PC-3 (cell line): ENCODE measurements at regions of chr7 and their contacts with region 1.

Region 1: DNA sequence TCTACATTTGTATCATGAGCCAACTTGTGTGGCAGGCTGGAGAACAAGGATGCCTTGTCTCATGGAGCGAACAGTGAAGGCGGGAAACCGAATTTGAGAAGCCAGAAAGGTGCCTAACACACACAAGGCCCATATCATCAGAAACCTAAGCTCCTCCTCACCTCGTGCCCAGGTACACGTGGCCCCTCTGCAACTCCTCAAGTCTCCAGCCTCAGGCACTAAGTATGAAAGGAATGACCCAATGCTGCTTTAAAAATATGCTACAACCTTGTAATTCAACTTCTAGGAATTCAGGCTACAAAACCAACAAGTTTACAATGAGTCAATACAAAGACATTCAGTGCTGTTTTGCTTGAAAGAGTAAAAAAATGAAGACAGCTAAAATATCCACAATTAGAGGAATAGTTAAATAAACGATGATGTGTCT is 95.7 kb downstream of the CDK6 start:
- DNase-seq: peak; percentile 89
- ATAC-seq: peak; percentile 83
- H3K4me3 ChIP-seq: peak overlapping the region; percentile 43
- H3K27ac ChIP-seq: peak overlapping the region; percentile 46
- H3K4me1 ChIP-seq: peaks cover 28% of the 10 kb centered on the region
- H3K27me3 ChIP-seq: no peaks in the 10 kb centered on the region
- CTCF ChIP-seq: no peak

Region 2: GRCh38 chr7:92489634-92490033 is 251.1 kb before region 1 on chr7:
- CTCF ChIA-PET with region 1: no interaction called
- POLR2A ChIA-PET with region 1: no interaction called
- intact Hi-C with region 1: no loop called
- DNase-seq: no peak
- ATAC-seq: no peak
- H3K4me3 ChIP-seq: no peak overlapping the region
- H3K27ac ChIP-seq: no peak overlapping the region
- H3K4me1 ChIP-seq: peaks cover 5% of the 10 kb centered on the region
- H3K27me3 ChIP-seq: no peaks in the 10 kb centered on the region
- CTCF ChIP-seq: no peak

Region 3: GRCh38 chr7:92691578-92691977 is 49.1 kb before region 1 on chr7:
- CTCF ChIA-PET with region 1: no interaction called
- POLR2A ChIA-PET with region 1: no interaction called
- intact Hi-C with region 1: loop called (anchors 5 kb)
- DNase-seq: peak; percentile 81
- ATAC-seq: peak; percentile 77
- H3K4me3 ChIP-seq: no peak overlapping the region
- H3K27ac ChIP-seq: no peak overlapping the region
- H3K4me1 ChIP-seq: peaks cover 14% of the 10 kb centered on the region
- H3K27me3 ChIP-seq: no peaks in the 10 kb centered on the region
- CTCF ChIP-seq: peak; percentile 81

Region 4: DNA sequence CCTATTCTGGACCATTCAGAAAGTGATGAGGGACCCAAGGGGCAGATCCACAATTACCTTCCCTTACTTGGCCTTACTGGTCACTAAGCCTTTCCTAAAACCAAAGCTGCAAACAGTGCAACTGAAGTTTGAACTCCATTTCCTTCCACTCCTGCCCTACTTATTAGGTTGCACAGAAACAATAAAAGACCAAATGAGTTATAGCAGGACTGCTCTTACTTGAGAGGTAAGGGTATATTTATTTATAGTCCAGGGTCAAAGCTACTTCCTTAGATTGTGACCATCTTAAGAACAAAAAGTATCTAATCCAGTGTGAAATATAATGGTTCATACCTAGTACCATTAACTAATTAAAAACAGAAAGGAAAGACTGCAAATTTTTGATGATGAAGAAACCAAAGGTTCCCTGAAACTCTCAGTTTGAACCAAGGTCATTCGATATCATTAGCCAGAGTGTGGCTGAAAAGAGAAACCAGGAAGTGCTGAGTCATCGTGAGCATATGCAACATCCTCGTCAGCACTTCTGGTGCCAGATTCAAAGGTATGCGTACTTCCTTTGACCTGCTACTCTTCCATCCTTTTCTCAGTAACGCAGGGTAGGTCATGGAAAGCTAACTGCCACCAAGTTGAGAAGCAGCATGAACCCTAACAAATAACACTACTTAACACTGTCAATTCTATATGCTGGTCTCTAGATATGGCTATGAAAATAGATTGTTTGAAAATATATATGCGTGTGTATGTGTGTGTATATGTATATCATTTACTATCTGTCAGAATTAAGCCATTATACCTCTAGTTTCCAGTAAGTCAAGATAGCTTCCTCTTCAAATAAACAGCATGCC is 68.9 kb after region 1 on chr7:
- CTCF ChIA-PET with region 1: no interaction called
- POLR2A ChIA-PET with region 1: no interaction called
- intact Hi-C with region 1: no loop called
- DNase-seq: peak; percentile 89
- ATAC-seq: peak; percentile 96
- H3K4me3 ChIP-seq: peak overlapping the region; percentile 31
- H3K27ac ChIP-seq: peak overlapping the region; percentile 89
- H3K4me1 ChIP-seq: peaks cover 21% of the 10 kb centered on the region
- H3K27me3 ChIP-seq: no peaks in the 10 kb centered on the region
- CTCF ChIP-seq: no peak

Region 5: DNA sequence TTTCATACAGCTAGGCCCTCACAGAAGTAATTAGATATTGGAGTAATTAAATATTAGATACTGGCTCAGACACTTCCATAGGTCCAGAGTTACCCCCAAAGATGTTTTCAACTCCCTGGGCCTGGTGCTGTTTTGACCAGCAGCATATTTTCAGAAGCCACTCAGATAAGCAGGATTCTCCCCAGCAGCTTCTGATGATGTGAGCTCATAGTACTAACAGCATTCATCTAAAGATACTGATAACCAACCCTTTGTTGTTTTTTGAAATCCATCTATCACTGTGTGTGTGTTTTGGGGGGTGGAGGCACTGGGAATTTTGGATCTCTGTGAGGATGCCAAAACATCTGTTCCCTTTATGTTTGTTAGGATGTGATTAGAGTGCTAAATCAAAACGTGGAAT is 544.2 kb after region 1 on chr7:
- CTCF ChIA-PET with region 1: no interaction called
- POLR2A ChIA-PET with region 1: no interaction called
- intact Hi-C with region 1: no loop called
- DNase-seq: no peak
- ATAC-seq: no peak
- H3K4me3 ChIP-seq: no peak overlapping the region
- H3K27ac ChIP-seq: no peak overlapping the region
- H3K4me1 ChIP-seq: no peaks in the 10 kb centered on the region
- H3K27me3 ChIP-seq: no peaks in the 10 kb centered on the region
- CTCF ChIP-seq: no peak